Body of pancreas (tissue), 4 donors: ENCODE measurements at regions of chr2 and their contacts with region 1.

Region 1: DNA sequence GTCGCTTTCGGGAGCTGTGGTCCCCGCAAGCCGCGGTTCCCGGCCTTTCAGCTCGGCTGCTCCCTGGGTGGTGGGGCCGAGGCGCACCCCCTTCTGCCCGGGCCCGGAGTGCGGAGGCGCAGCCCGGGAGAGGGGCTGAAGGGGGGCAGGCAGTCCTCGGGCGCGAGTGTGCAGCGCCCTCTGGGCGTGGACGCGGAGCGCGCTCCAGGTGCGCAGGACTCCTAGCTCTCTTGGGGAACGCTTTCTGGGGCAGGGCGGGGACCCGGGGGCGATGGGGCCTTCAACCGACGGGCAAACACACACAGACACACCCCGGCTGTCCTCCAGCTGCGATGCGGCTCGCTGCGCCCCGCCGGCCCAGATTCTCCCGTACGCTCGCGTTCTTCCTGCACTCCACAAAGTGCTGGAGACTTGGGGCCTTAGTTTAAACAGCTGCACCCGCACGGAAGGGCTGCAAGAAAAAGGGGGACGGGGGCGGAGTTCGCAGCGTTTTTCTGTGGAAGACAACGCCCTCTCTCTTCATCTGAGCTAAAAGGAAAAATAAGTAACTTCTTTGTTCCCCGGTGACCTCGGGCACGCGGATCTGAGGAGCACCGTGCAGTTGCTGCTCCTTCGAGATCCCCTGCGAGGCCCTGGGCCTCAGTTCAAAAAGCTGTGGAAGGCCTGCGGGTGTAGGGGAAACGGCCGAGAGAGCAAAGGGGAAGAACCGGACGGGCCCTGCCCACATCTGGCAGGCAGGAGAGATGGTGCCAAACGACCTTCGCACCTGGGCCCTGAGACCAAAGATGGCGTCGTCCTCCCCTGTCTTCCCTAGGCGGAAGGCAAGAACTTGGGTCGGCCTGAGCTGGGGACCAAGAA is 593 bp upstream of the SDC1 start:
- DNase-seq: peak; percentile 65 to 78 (median 71)
- ATAC-seq: peak; percentile 70
- H3K4me3 ChIP-seq: peak overlapping the region; percentile 49 to 70
- H3K27ac ChIP-seq: peak overlapping the region; percentile 43 to 88 (median 78)
- H3K4me1 ChIP-seq: peaks cover 29% of the 10 kb centered on the region
- H3K27me3 ChIP-seq: no peaks in the 10 kb centered on the region
- CTCF ChIP-seq: peak; percentile 49 to 75 (median 64)
- POLR2A ChIP-seq: peak in 1 of 3 donors; percentile 31

Region 2: GRCh38 chr2:20130821-20131645 is 94.5 kb before region 1 on chr2:
- intact Hi-C with region 1: loop called (anchors 5 kb)
- DNase-seq: no peak
- ATAC-seq: no peak
- H3K4me3 ChIP-seq: no peak overlapping the region
- H3K27ac ChIP-seq: peak overlapping the region in 3 of 4 donors; percentile 59 to 80 (median 62)
- H3K4me1 ChIP-seq: peaks cover 24% of the 10 kb centered on the region
- H3K27me3 ChIP-seq: no peaks in the 10 kb centered on the region
- CTCF ChIP-seq: no peak
- POLR2A ChIP-seq: no peak